ENCODE measurements at regions of chr17 and their contacts with region 1.

Region 1: GRCh38 chr17:42964161-42964932 is at the start of gene AARSD1:
- DNase-seq: peak; percentile 79 to 97 (median 86)
- ATAC-seq: peak; percentile 94
- H3K4me3 ChIP-seq: peak within 1 kb of the TSS; percentile 67
- H3K27ac ChIP-seq: peak within 1 kb of the TSS; percentile 86
- H3K4me1 ChIP-seq: peaks cover 3 to 10% of the 10 kb centered on the region in 2 experiments; a peak in 4 of 5 replicates
- H3K27me3 ChIP-seq: no peaks in the 10 kb centered on the region
- CTCF ChIP-seq: no peak
- EP300 ChIP-seq: no peak
- POLR2A ChIP-seq: peak; percentile 97
- RAD21 ChIP-seq: no peak
- polyA plus RNA-seq, gene AARSD1: 51.7 to 91.5 TPM

Region 2: GRCh38 chr17:42980398-42981397 is 16.4 kb after region 1 on chr17 and contains the start of gene RUNDC1:
- CTCF ChIA-PET with region 1: no interaction called
- POLR2A ChIA-PET with region 1: interaction called, 13 read pairs
- in situ Hi-C with region 1: no loop called
- intact Hi-C with region 1: no loop called
- DNase-seq: peak; percentile 92 to 96 (median 94)
- ATAC-seq: peak; percentile 88
- H3K4me3 ChIP-seq: peak within 1 kb of the TSS; percentile 92
- H3K27ac ChIP-seq: peak within 1 kb of the TSS; percentile 92
- H3K4me1 ChIP-seq: peaks cover 21 to 28% of the 10 kb centered on the region in 2 experiments; a peak in 4 of 5 replicates
- H3K27me3 ChIP-seq: no peaks in the 10 kb centered on the region
- CTCF ChIP-seq: peak; percentile 27 to 78 (median 51); a peak in 4 of 6 replicates
- EP300 ChIP-seq: no peak
- POLR2A ChIP-seq: peak; percentile 57; the same call in 1 of the 2 replicates
- RAD21 ChIP-seq: peak in 1 of 2 experiments; percentile 61; a peak in 2 of 4 replicates
- polyA plus RNA-seq, gene RUNDC1: 3.4 to 3.6 TPM

Region 3: DNA sequence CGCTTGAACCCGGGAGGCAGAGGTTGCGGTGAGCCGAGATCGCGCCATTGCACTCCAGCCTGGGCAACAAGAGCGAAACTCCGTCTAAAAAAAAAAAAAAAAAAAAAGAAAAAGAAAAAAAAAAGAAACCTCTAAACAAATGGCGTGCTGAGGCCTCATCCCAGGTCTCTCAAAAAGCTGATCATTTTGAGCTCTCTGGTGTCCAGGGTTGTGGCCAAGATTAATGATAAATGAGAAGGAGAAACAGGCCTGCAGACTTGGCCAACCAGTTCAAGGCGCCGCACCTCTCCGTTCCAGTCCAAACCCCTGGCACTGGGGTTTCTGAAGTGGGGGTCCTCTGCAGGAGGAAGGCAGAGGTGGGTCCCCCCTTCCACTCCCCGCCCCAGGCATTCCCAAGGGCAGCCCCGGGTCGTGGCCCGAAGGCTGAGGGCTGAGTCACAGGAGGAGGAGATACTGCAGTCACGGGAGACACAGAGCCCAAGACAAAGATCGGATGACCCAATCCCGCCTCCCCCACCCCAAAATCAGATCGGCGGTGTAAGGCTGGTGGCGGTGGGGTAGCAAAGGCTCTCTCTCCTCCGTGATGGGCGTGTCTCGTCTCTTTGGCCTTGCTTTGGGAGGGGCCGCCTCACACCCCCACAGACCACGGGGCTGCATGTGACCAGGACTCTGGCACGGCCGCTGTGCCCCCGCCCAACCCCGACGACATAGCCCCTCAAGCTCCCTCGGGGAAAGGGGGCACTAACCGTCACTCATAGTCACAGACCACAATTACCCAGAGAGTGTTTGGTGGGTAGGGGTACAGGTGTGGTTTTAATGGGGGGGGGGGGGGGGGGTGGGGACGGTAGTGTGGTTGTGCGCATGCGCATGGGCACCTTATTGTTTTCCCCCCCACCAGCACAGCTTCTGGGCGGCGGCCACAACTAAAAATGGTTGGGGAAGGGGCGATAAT is 56.7 kb after region 1 on chr17:
- CTCF ChIA-PET with region 1: no interaction called
- POLR2A ChIA-PET with region 1: no interaction called
- in situ Hi-C with region 1: no loop called
- intact Hi-C with region 1: no loop called
- DNase-seq: peak; percentile 83 to 94 (median 87)
- ATAC-seq: peak; percentile 69
- H3K4me3 ChIP-seq: peak overlapping the region; percentile 87
- H3K27ac ChIP-seq: peak overlapping the region; percentile 83
- H3K4me1 ChIP-seq: peaks cover 27 to 64% of the 10 kb centered on the region in 2 experiments
- H3K27me3 ChIP-seq: no peaks in the 10 kb centered on the region
- CTCF ChIP-seq: no peak
- EP300 ChIP-seq: peak; percentile 77
- POLR2A ChIP-seq: no peak
- RAD21 ChIP-seq: no peak

Measured in K562 (cell line).